ENCODE measurements at regions of chr4 and their contacts with region 1.

Region 1: GRCh38 chr4:38319456-38320342 is 344.3 kb upstream of the KLF3 start:
- DNase-seq: peak; percentile 24
- H3K4me3 ChIP-seq: peak overlapping the region in 3 of 4 donors; percentile 19 to 60 (median 32)
- H3K27ac ChIP-seq: peak overlapping the region; percentile 76 to 96 (median 90)
- H3K4me1 ChIP-seq: peaks cover 10 to 57% (median 33%) of the 10 kb centered on the region in 3 donors
- H3K27me3 ChIP-seq: no peaks in the 10 kb centered on the region
- CTCF ChIP-seq: peak; percentile 94 to 99 (median 98)
- POLR2A ChIP-seq: no peak

Region 2: GRCh38 chr4:38189445-38189844 is 130.3 kb before region 1 on chr4:
- intact Hi-C with region 1: loop called (anchors 5 kb)
- DNase-seq: no peak
- H3K4me3 ChIP-seq: no peak overlapping the region
- H3K27ac ChIP-seq: peak overlapping the region; percentile 64 to 84 (median 82)
- H3K4me1 ChIP-seq: peaks cover 24 to 70% (median 55%) of the 10 kb centered on the region in 3 donors
- H3K27me3 ChIP-seq: no peaks in the 10 kb centered on the region
- CTCF ChIP-seq: no peak
- POLR2A ChIP-seq: no peak

Region 3: DNA sequence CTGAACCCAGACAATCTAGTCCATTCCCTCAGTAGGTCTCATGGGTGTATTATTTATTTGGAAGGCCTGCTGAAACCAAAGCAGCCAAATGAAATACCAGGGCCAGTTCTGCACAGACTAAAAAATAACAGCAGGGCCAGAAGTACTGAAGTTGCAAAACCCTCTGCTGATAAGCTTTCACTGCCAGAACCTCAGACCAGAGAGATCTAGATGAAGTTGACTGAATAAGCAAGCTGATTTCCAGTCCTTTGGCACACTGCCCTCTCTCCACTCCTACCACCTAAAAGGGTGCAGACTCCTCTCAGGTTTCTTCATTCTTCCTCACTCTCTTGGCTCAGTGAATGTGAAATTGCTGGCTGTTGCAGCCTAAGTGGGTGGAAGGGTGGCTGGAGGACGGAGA is 67.6 kb after region 1 on chr4:
- intact Hi-C with region 1: loop called (anchors 10 kb)
- DNase-seq: no peak
- H3K4me3 ChIP-seq: no peak overlapping the region
- H3K27ac ChIP-seq: peak overlapping the region; percentile 57 to 91 (median 82)
- H3K4me1 ChIP-seq: peaks cover 17 to 81% (median 49%) of the 10 kb centered on the region in 3 donors
- H3K27me3 ChIP-seq: no peaks in the 10 kb centered on the region
- CTCF ChIP-seq: no peak
- POLR2A ChIP-seq: no peak

Region 4: GRCh38 chr4:38503689-38504395 is 184.1 kb after region 1 on chr4:
- intact Hi-C with region 1: no loop called
- DNase-seq: no peak
- H3K4me3 ChIP-seq: no peak overlapping the region
- H3K27ac ChIP-seq: no peak overlapping the region
- H3K4me1 ChIP-seq: no peaks in the 10 kb centered on the region
- H3K27me3 ChIP-seq: no peaks in the 10 kb centered on the region
- CTCF ChIP-seq: no peak
- POLR2A ChIP-seq: no peak

Region 5: GRCh38 chr4:38673130-38673978 is 353.7 kb after region 1 on chr4:
- intact Hi-C with region 1: loop called (anchors 5 kb)
- DNase-seq: no peak
- H3K4me3 ChIP-seq: peak overlapping the region in 3 of 4 donors; percentile 20 to 50 (median 21)
- H3K27ac ChIP-seq: peak overlapping the region; percentile 95 to 100 (median 97)
- H3K4me1 ChIP-seq: peaks cover 84 to 100% (median 94%) of the 10 kb centered on the region in 3 donors
- H3K27me3 ChIP-seq: no peaks in the 10 kb centered on the region
- CTCF ChIP-seq: peak in 1 of 6 experiments; percentile 8
- POLR2A ChIP-seq: peak in 1 of 4 donors; percentile 26